AG04449 (cell line): ENCODE measurements at regions of chr11 and their contacts with region 1.

Region 1: GRCh38 chr11:57480409-57481137 is 20.2 kb downstream of the RTN4RL2 start:
- DNase-seq: no peak
- H3K4me3 ChIP-seq: no peak overlapping the region
- CTCF ChIP-seq: peak; percentile 83

Region 2: GRCh38 chr11:56776809-56777208 is 703.8 kb before region 1 on chr11:
- CTCF ChIA-PET with region 1: no interaction called
- POLR2A ChIA-PET with region 1: no interaction called
- DNase-seq: no peak
- H3K4me3 ChIP-seq: no peak overlapping the region
- CTCF ChIP-seq: no peak

Region 3: GRCh38 chr11:57463671-57464538 is 16.7 kb before region 1 on chr11:
- CTCF ChIA-PET with region 1: interaction called, 140 read pairs
- POLR2A ChIA-PET with region 1: no interaction called
- DNase-seq: no peak
- H3K4me3 ChIP-seq: no peak overlapping the region
- CTCF ChIP-seq: no peak

Region 4: DNA sequence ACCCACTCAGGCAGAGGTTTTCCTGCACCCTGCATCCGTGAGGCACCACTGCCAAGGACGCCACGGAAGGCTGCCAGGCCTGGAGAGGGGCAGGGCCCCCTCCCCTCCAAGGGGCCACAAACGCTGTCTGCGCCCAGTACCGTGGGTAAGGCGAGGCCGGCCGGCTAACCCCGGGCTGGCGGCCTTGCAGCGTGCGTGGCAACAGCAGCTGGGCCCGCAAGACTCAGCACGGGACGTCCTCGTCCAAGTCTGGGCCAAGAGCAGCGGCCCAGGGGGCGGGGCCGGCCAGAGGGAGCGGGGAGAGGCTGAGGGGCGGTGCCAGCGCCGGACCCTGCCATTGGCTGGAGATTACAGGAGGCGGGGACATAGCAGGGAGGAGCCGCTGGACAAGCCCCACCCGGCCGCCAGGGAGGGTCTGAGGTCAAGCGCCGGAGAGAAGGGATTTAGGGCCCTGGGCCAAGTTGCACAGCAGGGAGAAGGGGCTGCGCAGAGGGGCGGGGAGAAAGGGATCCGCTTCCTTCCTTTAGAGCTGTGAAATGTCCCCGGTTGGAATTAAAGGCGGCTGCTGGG is 18.9 kb after region 1 on chr11:
- CTCF ChIA-PET with region 1: interaction called, 191 read pairs
- POLR2A ChIA-PET with region 1: interaction called, 3 read pairs
- DNase-seq: no peak
- H3K4me3 ChIP-seq: peak overlapping the region; percentile 45
- CTCF ChIP-seq: no peak

Region 5: DNA sequence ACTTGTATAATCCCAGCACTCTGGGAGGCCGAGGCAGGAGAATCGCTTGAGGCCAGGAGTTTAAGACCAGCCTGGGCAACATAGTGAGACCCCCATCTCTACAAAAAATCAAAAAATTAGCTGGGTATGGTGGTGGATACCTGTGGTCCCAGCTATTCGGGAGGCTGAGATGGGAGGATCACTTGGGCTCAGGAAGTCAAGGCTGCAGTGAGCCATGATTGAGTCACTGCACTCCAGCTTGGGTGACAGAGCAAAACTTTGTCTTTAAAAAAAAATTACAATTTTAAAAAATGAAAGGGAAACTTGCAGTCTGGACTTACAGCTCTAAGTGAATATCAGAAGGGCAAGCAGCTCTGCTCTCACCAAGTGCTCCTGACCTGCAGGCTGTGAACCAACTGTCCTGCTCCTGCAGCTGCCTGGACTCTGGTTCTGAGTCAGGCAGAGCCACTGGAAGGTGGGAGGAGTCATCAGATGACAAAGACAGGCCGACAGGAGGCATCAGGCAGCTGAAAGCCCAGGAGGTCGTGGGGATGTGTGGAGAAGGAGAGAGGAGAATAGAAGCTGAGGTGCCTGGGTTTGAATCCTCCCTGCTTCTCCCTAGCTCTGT is 66.4 kb after region 1 on chr11:
- CTCF ChIA-PET with region 1: no interaction called
- POLR2A ChIA-PET with region 1: no interaction called
- DNase-seq: no peak
- H3K4me3 ChIP-seq: no peak overlapping the region
- CTCF ChIP-seq: peak; percentile 22